Activated naive CD4-positive, alpha-beta T cell treated with anti-CD3 and anti-CD28 coated beads, Interleukin-2, amount 10 ng/mL, durations not matched to agents 7 days and 5 days (primary cell): ENCODE measurements at regions of chr14 and their contacts with region 1.

Region 1: DNA sequence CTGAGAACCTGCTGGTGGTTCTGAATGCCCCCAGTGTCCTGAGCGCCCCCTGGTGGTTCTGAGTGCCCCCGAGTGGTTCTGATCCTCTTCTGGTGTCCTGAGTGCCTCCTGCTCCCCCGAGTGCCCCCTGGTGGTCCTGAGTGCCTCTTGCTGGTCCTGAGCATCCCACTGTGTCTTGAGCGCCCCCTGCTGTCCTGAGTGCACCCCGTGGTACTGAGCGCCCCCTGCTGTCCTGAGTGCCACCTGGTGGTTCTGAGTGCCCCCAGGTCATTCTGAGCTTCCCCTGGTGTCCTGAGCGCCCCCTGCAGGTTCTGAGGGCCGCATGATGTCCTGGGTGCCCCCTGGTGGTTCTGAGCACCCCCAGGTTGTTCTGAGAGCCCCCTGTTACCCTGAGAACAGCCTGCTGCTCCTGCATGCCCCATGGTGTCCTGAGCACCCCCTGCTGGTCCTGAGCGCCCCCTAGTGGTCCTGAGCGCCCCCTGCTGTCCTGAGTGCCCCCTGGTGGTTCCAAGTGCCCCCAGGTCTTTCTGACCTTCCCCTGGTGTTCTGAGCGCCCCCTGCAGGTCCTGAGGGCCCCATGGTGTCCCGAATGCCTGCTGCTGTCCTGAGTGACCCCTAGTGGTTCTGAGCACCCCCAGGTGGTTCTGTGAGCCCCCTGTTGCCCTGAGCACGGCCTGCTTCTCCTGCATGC is 1165.4 kb downstream of the TMEM121 start:
- DNase-seq: peak; percentile 75
- H3K4me3 Mint-ChIP-seq: no peak overlapping the region
- H3K27ac Mint-ChIP-seq: no peak overlapping the region
- H3K4me1 Mint-ChIP-seq: peaks cover 14% of the 10 kb centered on the region
- H3K27me3 Mint-ChIP-seq: peaks cover 28% of the 10 kb centered on the region

Region 2: DNA sequence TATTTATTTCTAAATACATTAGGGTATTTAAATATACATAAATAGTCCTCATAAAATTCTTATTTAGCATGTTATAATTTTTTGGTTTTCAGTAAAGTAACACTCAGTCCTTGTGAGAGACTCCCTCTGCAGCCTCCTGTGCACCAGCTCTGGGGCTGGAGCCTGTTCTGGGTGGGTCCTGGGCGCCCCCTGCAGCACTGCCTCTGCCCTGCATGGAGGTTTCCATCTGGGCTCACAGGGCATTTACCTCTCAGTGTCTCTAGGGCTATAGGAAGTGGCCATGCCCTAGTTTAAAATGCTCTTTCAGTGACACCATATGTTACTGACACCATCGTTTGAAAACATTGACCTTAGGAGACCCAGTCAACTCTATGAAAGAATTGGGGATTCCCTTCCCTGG is 10.2 kb before region 1 on chr14:
- CTCF ChIA-PET with region 1: interaction called, 19 read pairs
- DNase-seq: peak; percentile 23
- H3K4me3 Mint-ChIP-seq: no peak overlapping the region
- H3K27ac Mint-ChIP-seq: no peak overlapping the region
- H3K4me1 Mint-ChIP-seq: no peaks in the 10 kb centered on the region
- H3K27me3 Mint-ChIP-seq: peaks cover 44% of the 10 kb centered on the region

Region 3: GRCh38 chr14:106738075-106738474 is 46.3 kb after region 1 on chr14:
- CTCF ChIA-PET with region 1: interaction called, 23 read pairs
- DNase-seq: peak; percentile 27
- H3K4me3 Mint-ChIP-seq: no peak overlapping the region
- H3K27ac Mint-ChIP-seq: no peak overlapping the region
- H3K4me1 Mint-ChIP-seq: peaks cover 7% of the 10 kb centered on the region
- H3K27me3 Mint-ChIP-seq: peaks cover 33% of the 10 kb centered on the region